CD8-positive, alpha-beta T cell (primary cell): ENCODE measurements at regions of chr10 and their contacts with region 1.

Region 1: DNA sequence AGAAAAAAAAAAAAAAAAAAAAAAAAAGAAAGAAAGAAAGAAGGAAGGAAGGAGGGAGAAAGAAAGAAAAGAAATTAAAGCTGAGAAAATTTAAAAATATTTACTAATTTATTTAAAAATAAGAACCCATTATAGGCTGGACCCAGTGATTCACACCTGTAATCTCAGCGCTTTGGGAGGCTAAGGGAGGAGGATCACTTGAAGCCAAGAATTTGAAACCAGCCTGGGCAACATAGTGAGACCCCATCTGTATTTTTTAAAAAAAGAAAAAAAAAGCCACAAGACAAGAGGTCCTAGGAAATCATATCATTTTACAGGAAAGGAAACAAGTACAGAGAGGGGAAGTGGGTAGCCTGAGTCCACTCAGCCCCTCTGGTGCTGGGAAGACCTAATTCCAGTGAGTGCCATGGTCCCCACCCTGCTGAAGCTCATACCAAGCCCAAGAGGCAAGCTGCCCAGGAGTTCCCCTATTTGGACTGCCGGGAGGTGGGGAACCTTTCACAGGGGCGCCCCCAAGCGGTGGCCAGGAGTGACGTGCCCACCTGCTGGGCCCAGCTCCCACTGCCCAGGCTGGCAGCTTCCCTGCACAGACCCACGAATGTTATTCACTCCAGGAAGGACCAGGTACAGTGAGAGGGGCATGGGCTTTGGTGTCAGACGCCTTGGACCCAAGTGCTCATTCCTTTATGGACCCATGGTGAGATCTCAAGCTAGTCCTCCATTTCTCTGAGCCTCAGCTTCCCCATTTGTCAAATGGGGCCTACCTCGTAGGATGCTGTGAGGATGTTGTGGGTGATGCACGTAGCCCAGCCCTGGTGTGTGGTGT is 133.6 kb downstream of the ZMIZ1 start:
- DNase-seq: peak in 6 of 9 experiments; percentile 7 to 50 (median 29)
- ATAC-seq: no peak
- H3K4me3 ChIP-seq: no peak overlapping the region
- H3K4me3 Mint-ChIP-seq: no peak overlapping the region
- H3K27ac ChIP-seq: no peak overlapping the region
- H3K27ac Mint-ChIP-seq: no peak overlapping the region
- H3K4me1 ChIP-seq: no peaks in the 10 kb centered on the region
- H3K4me1 Mint-ChIP-seq: no peaks in the 10 kb centered on the region
- H3K27me3 ChIP-seq: no peaks in the 10 kb centered on the region
- H3K27me3 Mint-ChIP-seq: no peaks in the 10 kb centered on the region
- CTCF ChIP-seq: peak; percentile 22

Region 2: DNA sequence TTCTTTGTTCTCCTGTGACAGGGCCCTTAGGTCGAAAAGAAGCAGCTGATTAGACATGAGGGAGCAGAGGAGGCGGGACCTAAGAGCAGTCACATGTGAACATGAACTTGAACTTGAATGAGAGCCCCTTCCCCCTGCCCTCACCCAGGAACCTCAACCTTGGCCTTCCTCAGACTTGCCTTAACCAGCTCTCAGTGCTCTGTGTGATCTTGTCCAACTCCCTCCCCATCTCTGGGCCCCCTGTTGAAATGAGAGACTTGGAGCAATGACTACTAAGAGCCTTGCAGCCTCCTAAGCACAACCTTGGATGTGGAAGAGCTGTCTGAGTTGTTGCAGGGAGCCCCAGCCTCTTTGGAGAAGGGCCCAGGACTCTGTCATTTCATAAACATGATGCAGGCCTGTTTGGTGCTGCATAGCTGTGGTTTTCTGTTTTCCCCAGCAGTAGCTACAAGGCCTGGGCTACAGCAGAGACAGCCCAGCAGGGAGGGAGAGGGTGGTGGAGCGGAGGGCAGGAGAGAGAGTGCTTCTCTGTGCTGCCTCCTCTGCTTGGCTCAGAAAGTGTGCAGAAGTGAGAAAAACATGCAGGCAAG is 257.6 kb before region 1 on chr10:
- CTCF ChIA-PET with region 1: no interaction called
- POLR2A ChIA-PET with region 1: no interaction called
- intact Hi-C with region 1: no loop called
- DNase-seq: peak in 1 of 9 experiments; percentile 14
- ATAC-seq: peak; percentile 38
- H3K4me3 ChIP-seq: no peak overlapping the region
- H3K4me3 Mint-ChIP-seq: no peak overlapping the region
- H3K27ac ChIP-seq: no peak overlapping the region
- H3K27ac Mint-ChIP-seq: peak overlapping the region; percentile 74
- H3K4me1 ChIP-seq: peaks cover 3% of the 10 kb centered on the region
- H3K4me1 Mint-ChIP-seq: peaks cover 18% of the 10 kb centered on the region
- H3K27me3 ChIP-seq: no peaks in the 10 kb centered on the region
- H3K27me3 Mint-ChIP-seq: no peaks in the 10 kb centered on the region
- CTCF ChIP-seq: no peak

Region 3: GRCh38 chr10:79229067-79229541 is 26.7 kb after region 1 on chr10:
- CTCF ChIA-PET with region 1: interaction called, 4 read pairs
- POLR2A ChIA-PET with region 1: no interaction called
- intact Hi-C with region 1: loop called in 1 of 2 experiments (anchors 1 kb)
- DNase-seq: no peak
- ATAC-seq: no peak
- H3K4me3 ChIP-seq: no peak overlapping the region
- H3K4me3 Mint-ChIP-seq: no peak overlapping the region
- H3K27ac ChIP-seq: no peak overlapping the region
- H3K27ac Mint-ChIP-seq: no peak overlapping the region
- H3K4me1 ChIP-seq: no peaks in the 10 kb centered on the region
- H3K4me1 Mint-ChIP-seq: no peaks in the 10 kb centered on the region
- H3K27me3 ChIP-seq: no peaks in the 10 kb centered on the region
- H3K27me3 Mint-ChIP-seq: no peaks in the 10 kb centered on the region
- CTCF ChIP-seq: no peak

Region 4: DNA sequence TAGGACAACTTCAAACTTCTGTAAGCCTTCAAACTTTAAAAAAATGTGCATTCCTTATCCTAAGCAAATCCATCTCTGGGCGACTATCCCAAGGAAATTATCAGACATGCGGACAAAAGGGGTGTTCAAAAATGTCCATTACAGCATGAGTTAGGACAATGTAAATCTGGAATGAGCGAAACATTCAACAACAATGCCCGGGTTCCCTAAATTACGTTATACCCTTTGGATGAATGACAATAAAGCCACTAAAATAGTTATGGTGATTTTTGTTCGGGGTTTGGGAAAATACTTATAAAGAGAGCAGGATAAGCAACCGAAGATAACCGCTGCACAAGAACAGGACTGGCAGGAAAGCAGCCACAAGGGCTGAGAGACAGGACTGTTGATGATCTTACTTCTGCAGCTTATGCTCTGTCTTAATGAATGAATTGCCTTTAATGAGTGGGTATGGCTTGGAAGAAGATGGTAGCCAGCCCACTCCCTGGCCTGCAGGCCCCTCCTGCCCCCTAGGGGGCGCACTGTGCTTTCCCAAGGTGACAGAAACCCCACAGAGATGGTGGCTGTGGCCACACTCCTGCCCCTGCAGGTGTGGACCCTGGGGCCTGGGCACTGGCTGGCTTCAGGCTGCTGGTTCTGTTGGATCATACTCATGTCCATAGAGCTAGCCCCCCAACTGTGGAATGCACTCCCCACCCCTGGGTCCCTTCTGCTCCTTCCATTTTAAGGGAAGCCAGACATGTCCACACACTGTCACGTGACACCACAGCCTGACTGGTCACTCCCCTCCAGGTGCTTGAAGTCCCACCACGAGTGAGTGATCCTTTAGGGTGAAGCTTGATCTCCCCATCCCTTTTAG is 198.0 kb after region 1 on chr10:
- CTCF ChIA-PET with region 1: no interaction called
- POLR2A ChIA-PET with region 1: no interaction called
- intact Hi-C with region 1: no loop called
- DNase-seq: peak in 7 of 9 experiments; percentile 21 to 61 (median 49)
- ATAC-seq: peak; percentile 34
- H3K4me3 ChIP-seq: no peak overlapping the region
- H3K4me3 Mint-ChIP-seq: no peak overlapping the region
- H3K27ac ChIP-seq: no peak overlapping the region
- H3K27ac Mint-ChIP-seq: no peak overlapping the region
- H3K4me1 ChIP-seq: no peaks in the 10 kb centered on the region
- H3K4me1 Mint-ChIP-seq: no peaks in the 10 kb centered on the region
- H3K27me3 ChIP-seq: no peaks in the 10 kb centered on the region
- H3K27me3 Mint-ChIP-seq: no peaks in the 10 kb centered on the region
- CTCF ChIP-seq: peak; percentile 45